ENCODE measurements at regions of chr1 and their contacts with region 1.

Region 1: GRCh38 chr1:31955917-31956736 is 18.0 kb upstream of the PTP4A2 start:
- DNase-seq: peak; percentile 91
- ATAC-seq: peak; percentile 84 to 91
- H3K4me3 ChIP-seq: no peak overlapping the region
- H3K27ac ChIP-seq: peak overlapping the region; percentile 92 to 99 (median 95)
- H3K4me1 ChIP-seq: peaks cover 48 to 49% of the 10 kb centered on the region in 2 donors
- H3K27me3 ChIP-seq: no peaks in the 10 kb centered on the region
- CTCF ChIP-seq: peak in 2 of 5 experiments; percentile 21 to 41
- POLR2A ChIP-seq: peak; percentile 61 to 88

Region 2: GRCh38 chr1:31663622-31664452 is 292.3 kb before region 1 on chr1:
- in situ Hi-C with region 1: loop called (anchors 25 kb)
- intact Hi-C with region 1: loop called (anchors 5 kb)
- DNase-seq: peak in 1 of 2 donors; percentile 37
- ATAC-seq: peak; percentile 53 to 57
- H3K4me3 ChIP-seq: no peak overlapping the region
- H3K27ac ChIP-seq: no peak overlapping the region
- H3K4me1 ChIP-seq: no peaks in the 10 kb centered on the region
- H3K27me3 ChIP-seq: no peaks in the 10 kb centered on the region
- CTCF ChIP-seq: peak; percentile 88 to 96 (median 94)
- POLR2A ChIP-seq: no peak

Region 3: GRCh38 chr1:31831397-31832378 is 124.4 kb before region 1 on chr1:
- in situ Hi-C with region 1: loop called in 1 of 4 experiments (anchors 10 kb)
- intact Hi-C with region 1: no loop called
- DNase-seq: no peak
- ATAC-seq: no peak
- H3K4me3 ChIP-seq: no peak overlapping the region
- H3K27ac ChIP-seq: no peak overlapping the region
- H3K4me1 ChIP-seq: no peaks in the 10 kb centered on the region
- H3K27me3 ChIP-seq: no peaks in the 10 kb centered on the region
- CTCF ChIP-seq: no peak
- POLR2A ChIP-seq: no peak

Region 4: DNA sequence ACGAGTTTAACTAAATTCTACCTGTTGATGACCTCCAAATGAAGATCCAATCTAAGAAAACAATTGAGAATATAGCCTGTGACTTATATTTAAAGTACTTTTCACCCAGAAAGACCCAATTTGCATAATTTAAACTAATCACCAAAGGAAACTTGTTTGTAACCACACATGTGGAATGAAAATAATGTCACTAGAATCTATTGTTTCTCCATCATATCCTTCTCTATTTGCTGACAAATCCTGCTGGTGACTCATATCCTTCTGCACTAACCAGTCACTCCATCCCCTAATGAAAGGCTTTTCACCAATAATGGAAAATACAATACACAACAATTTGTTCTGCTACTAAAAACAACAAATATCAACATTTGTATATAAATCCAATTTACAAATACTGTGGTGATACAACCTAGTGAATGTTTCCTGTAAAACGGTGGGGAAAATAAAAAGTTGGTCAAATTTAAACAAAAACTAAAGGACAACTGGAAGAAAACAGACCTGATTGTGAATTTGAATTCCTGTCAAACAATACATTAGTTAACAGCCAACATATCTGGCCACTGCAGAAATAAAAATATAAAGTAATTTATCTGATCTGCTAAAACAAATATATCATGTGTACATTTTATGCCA is 24.4 kb before region 1 on chr1:
- in situ Hi-C with region 1: no loop called
- intact Hi-C with region 1: loop called (anchors 2 kb)
- DNase-seq: no peak
- ATAC-seq: no peak
- H3K4me3 ChIP-seq: peak overlapping the region in 1 of 4 donors; percentile 6
- H3K27ac ChIP-seq: peak overlapping the region; percentile 97 to 99 (median 98)
- H3K4me1 ChIP-seq: peaks cover 92 to 97% of the 10 kb centered on the region in 2 donors
- H3K27me3 ChIP-seq: no peaks in the 10 kb centered on the region
- CTCF ChIP-seq: no peak
- POLR2A ChIP-seq: no peak

Region 5: GRCh38 chr1:32063261-32063681 is 107.1 kb after region 1 on chr1:
- in situ Hi-C with region 1: no loop called
- intact Hi-C with region 1: no loop called
- DNase-seq: no peak
- ATAC-seq: peak in 1 of 2 donors; percentile 65
- H3K4me3 ChIP-seq: no peak overlapping the region
- H3K27ac ChIP-seq: peak overlapping the region; percentile 66 to 75 (median 70)
- H3K4me1 ChIP-seq: peaks cover 14 to 18% of the 10 kb centered on the region in 2 donors
- H3K27me3 ChIP-seq: no peaks in the 10 kb centered on the region
- CTCF ChIP-seq: peak; percentile 34 to 64 (median 48)
- POLR2A ChIP-seq: no peak